Mammary epithelial cell (primary cell): ENCODE measurements at regions of chrX and their contacts with region 1.

Region 1: DNA sequence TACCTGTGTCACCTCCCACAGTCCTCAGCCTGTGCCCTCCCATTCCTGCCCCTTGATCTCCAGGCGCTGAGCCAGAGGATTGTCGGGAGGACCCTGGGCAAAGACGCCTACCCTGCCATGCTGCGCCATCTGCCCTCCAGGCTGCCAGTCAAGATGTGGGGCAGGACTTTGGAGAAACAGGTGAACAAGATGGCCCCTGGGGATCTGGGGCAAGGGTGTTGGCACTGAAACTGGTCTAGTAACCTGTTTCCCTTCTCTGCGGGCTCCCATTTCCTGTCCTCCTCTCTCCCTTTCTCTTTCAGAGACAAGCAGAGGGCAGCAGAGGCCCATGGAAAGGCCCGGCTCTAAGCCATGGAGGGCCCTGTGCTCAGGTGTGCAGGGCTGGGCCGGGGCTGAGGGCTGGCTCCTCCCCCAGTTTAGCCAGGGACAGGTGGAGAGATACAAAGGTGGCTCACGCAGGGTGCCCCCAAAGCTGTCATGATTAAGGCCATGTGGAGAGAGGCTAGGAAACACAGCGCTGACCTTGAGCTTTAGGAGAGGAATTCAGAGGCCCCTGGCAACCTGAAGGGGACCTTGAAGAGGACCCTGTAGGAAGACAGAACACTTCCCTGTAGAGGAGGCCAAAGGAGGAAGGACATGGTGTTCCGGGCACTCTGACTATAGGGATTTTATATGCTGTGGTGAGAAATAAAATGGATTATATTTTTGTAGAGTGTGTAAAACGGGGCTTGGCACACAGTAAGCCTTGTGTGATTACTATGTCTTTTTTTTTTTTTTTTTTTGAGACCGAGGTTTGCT is at the start of gene GLOD5:
- DNase-seq: peak; percentile 57
- H3K4me3 ChIP-seq: no peak within 1 kb of the TSS
- H3K27ac ChIP-seq: no peak within 1 kb of the TSS
- H3K4me1 ChIP-seq: no peaks in the 10 kb centered on the region
- H3K27me3 ChIP-seq: no peaks in the 10 kb centered on the region
- CTCF ChIP-seq: peak; percentile 27 to 57
- total RNA-seq, gene GLOD5: not detected

Region 2: GRCh38 chrX:47650164-47651042 is 1111.5 kb before region 1 on chrX and contains the start of gene ELK1:
- CTCF ChIA-PET with region 1: no interaction called
- dilution Hi-C with region 1: no loop called
- in situ Hi-C with region 1: no loop called
- intact Hi-C with region 1: no loop called
- DNase-seq: peak; percentile 97
- H3K4me3 ChIP-seq: peak within 1 kb of the TSS; percentile 52 to 77 (median 68)
- H3K27ac ChIP-seq: peak within 1 kb of the TSS; percentile 36
- H3K4me1 ChIP-seq: peaks cover 14% of the 10 kb centered on the region
- H3K27me3 ChIP-seq: no peaks in the 10 kb centered on the region
- CTCF ChIP-seq: no peak
- total RNA-seq, gene ELK1: 17.2 to 44.7 TPM

Region 3: DNA sequence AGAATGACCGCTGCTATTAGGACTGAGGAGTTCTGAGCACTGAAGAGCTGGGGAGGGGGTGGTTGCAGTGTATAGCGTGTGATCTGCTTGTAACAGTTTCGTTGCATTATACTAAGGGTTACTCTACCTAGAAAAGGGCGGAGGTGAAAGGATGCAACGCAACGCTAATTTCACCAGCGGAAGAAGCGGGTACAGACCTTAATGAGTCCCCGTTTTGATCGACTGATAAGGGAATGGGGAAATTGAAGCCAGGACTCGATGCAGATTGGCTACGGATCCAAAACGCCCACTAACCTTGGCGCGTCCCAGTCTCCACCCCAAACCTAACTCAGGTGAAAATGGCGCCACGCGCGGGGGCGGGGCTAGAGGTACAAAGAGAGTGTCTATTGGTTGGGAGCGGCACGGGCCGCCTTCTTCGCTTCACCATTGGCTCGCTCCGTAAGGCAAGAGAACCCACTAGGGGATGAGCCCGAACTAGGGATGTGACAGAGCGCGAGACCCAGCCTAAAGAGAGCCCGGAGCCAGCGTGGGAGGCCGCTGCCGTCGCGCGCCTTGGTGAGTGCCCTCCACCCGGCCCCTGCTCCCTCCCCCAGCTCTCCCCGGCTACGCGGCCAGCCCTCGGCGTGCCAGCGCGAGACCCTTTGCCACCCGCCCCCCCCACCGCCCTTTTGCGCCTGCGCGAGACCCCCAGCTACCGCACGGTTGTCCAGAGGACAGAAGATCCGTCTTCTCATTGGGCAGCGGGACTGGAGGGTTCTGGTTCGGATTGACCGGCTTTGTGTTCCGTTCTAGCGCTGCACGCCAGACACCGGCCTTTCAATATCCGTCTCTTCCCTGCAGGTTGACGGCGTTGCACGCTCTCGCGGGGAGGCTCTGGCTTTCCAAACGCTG is 240.3 kb before region 1 on chrX and contains the start of gene EBP:
- CTCF ChIA-PET with region 1: no interaction called
- dilution Hi-C with region 1: no loop called
- in situ Hi-C with region 1: no loop called
- intact Hi-C with region 1: no loop called
- DNase-seq: peak; percentile 94
- H3K4me3 ChIP-seq: peak within 1 kb of the TSS; percentile 54 to 62 (median 61)
- H3K27ac ChIP-seq: peak within 1 kb of the TSS; percentile 44
- H3K4me1 ChIP-seq: peaks cover 3% of the 10 kb centered on the region
- H3K27me3 ChIP-seq: no peaks in the 10 kb centered on the region
- CTCF ChIP-seq: no peak
- total RNA-seq, gene EBP: 86.4 to 292 TPM

Region 4: DNA sequence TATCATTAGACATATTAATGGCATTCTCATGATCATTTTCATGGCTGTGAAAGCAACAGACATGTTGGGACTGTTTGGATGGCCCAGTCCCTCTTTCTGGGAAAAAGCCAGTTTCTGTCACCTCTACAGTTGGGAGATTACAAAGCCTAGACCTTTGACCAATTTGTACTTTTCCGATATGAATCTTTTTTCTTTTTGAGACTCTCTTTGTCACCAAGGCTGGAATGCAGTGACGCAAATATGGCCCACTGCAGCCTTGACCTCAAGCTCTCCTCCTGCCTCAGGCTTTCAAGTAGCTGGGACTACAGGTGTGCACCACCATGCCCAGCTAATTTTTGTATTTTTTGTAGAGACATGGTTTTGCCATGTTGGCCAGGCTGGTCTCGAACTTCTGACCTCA is 213.0 kb before region 1 on chrX:
- CTCF ChIA-PET with region 1: no interaction called
- dilution Hi-C with region 1: no loop called
- in situ Hi-C with region 1: no loop called
- intact Hi-C with region 1: no loop called
- DNase-seq: no peak
- H3K4me3 ChIP-seq: no peak overlapping the region
- H3K27ac ChIP-seq: no peak overlapping the region
- H3K4me1 ChIP-seq: no peaks in the 10 kb centered on the region
- H3K27me3 ChIP-seq: no peaks in the 10 kb centered on the region
- CTCF ChIP-seq: no peak

Region 5: DNA sequence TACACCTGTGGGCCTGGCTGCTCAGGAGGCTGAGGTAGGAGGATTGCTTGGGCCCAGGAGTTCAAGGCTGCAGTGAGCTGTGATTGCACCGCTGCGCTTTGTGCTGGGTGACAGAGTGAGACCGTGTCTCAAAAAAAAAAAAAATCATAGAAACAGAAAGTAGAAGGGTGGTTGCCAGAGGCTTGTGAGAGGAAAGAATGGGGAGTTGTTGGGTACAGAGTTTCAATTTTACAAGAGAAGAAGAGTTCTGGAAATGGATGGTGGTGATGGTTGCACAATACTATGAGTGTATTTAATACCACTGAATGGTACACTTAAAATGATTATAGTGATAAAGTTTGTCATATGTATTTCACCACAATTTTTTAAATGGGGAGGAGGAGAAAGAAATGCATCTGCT is 10.5 kb before region 1 on chrX:
- CTCF ChIA-PET with region 1: no interaction called
- dilution Hi-C with region 1: no loop called
- in situ Hi-C with region 1: no loop called
- intact Hi-C with region 1: no loop called
- DNase-seq: no peak
- H3K4me3 ChIP-seq: no peak overlapping the region
- H3K27ac ChIP-seq: no peak overlapping the region
- H3K4me1 ChIP-seq: no peaks in the 10 kb centered on the region
- H3K27me3 ChIP-seq: no peaks in the 10 kb centered on the region
- CTCF ChIP-seq: no peak

Region 6: GRCh38 chrX:48854898-48855297 is 93.0 kb after region 1 on chrX:
- CTCF ChIA-PET with region 1: no interaction called
- dilution Hi-C with region 1: no loop called
- in situ Hi-C with region 1: no loop called
- intact Hi-C with region 1: loop called (anchors 5 kb)
- DNase-seq: peak; percentile 18
- H3K4me3 ChIP-seq: no peak overlapping the region
- H3K27ac ChIP-seq: no peak overlapping the region
- H3K4me1 ChIP-seq: no peaks in the 10 kb centered on the region
- H3K27me3 ChIP-seq: no peaks in the 10 kb centered on the region
- CTCF ChIP-seq: peak in 1 of 2 donors; percentile 55

Region 7: GRCh38 chrX:48917139-48918001 is 155.5 kb after region 1 on chrX:
- CTCF ChIA-PET with region 1: no interaction called
- dilution Hi-C with region 1: no loop called
- in situ Hi-C with region 1: loop called in 1 of 2 experiments (anchors 10 kb)
- intact Hi-C with region 1: loop called (anchors 1 kb)
- DNase-seq: peak; percentile 82
- H3K4me3 ChIP-seq: peak overlapping the region; percentile 8 to 70 (median 66)
- H3K27ac ChIP-seq: peak overlapping the region; percentile 56
- H3K4me1 ChIP-seq: peaks cover 5% of the 10 kb centered on the region
- H3K27me3 ChIP-seq: no peaks in the 10 kb centered on the region
- CTCF ChIP-seq: peak; percentile 88 to 89

Region 8: DNA sequence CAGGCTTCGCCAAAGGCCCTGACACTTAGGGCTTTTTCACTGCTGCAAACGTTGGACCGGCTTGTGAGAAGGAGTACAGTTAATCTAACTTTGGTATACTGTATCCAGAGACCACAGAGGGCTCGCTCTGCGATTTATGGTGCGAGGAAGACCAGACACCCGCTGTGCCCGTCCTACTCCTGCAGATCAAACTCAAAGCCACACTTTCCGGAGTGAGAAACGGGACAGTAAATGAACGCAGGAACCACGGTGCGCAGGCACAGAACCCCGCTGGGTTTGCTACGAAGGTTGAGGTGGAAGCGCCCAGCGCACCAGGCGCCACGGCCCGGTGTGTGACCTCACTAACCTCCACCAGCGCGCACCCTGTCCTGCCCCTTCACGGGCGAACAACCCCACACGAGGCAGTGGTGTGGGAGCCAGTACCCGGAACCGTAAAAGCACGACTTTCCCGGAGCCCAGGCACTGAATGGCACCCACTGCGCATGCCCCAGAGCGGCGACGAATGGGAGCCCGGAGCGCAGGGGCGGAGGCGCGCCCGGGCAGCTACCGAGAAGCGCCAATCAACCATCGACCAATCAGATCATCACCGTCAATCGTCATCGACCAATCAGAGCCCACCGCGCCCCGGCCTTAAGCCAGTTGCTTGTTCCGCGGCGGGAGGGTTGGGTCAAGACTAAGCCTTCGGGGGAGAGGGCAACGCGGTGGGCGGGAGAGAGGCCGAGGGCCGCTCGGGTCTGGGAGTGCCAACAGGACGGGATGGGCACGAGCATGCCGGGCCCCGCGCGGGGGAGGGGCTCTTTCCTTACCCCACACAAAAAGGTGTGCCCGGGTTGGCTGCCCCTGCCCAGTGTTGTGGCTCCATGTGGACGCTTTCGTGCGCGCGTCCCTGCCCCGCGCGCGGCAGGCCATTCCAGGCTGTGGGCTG is 339.1 kb after region 1 on chrX:
- CTCF ChIA-PET with region 1: no interaction called
- dilution Hi-C with region 1: no loop called
- in situ Hi-C with region 1: no loop called
- intact Hi-C with region 1: loop called (anchors 10 kb)
- DNase-seq: peak; percentile 89
- H3K4me3 ChIP-seq: peak overlapping the region; percentile 40 to 75 (median 63)
- H3K27ac ChIP-seq: peak overlapping the region; percentile 38
- H3K4me1 ChIP-seq: peaks cover 3% of the 10 kb centered on the region
- H3K27me3 ChIP-seq: no peaks in the 10 kb centered on the region
- CTCF ChIP-seq: no peak